ENCODE measurements at regions of chr3 and their contacts with region 1.

Region 1: GRCh38 chr3:45037734-45038455 is 11.8 kb downstream of the CLEC3B start:
- DNase-seq: peak; percentile 93 to 95 (median 94)
- H3K4me3 ChIP-seq: peak overlapping the region in 1 of 3 experiments; percentile 16
- H3K4me3 Mint-ChIP-seq: peak overlapping the region; percentile 55 to 68
- H3K27ac ChIP-seq: no peak overlapping the region
- H3K27ac Mint-ChIP-seq: peak overlapping the region in 2 of 7 donors; percentile 35 to 41
- H3K4me1 ChIP-seq: peaks cover 52 to 66% of the 10 kb centered on the region in 2 donors
- H3K4me1 Mint-ChIP-seq: peaks cover 68% of the 10 kb centered on the region
- H3K27me3 ChIP-seq: no peaks in the 10 kb centered on the region
- H3K27me3 Mint-ChIP-seq: peaks cover 0 to 6% (median 3%) of the 10 kb centered on the region in 3 donors
- CTCF ChIP-seq: peak; percentile 88

Region 2: DNA sequence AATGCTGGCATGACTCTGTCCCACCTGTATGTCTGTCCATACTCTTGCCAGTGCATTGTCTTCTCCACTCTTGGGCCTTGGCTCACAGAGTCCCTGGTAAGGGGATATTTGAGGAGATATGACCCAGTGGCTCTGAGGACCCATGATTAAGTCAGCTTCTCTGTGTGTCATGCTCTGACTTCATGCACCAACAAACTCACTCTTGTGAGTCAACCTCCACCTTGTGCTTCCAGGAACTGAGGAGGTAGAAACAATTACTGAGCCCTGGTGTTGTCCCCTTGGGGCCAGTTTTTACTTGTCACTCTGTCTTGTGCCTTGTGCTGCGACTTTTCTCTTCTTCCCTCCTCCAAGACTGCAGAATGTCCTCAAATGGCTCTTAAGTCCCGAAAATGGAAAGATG is 1220.1 kb before region 1 on chr3:
- intact Hi-C with region 1: no loop called
- DNase-seq: no peak
- H3K4me3 ChIP-seq: no peak overlapping the region
- H3K4me3 Mint-ChIP-seq: no peak overlapping the region
- H3K27ac ChIP-seq: no peak overlapping the region
- H3K27ac Mint-ChIP-seq: no peak overlapping the region
- H3K4me1 ChIP-seq: no peaks in the 10 kb centered on the region
- H3K4me1 Mint-ChIP-seq: no peaks in the 10 kb centered on the region
- H3K27me3 ChIP-seq: no peaks in the 10 kb centered on the region
- H3K27me3 Mint-ChIP-seq: peaks cover 0 to 2% (median 0%) of the 10 kb centered on the region in 3 donors
- CTCF ChIP-seq: no peak

Region 3: DNA sequence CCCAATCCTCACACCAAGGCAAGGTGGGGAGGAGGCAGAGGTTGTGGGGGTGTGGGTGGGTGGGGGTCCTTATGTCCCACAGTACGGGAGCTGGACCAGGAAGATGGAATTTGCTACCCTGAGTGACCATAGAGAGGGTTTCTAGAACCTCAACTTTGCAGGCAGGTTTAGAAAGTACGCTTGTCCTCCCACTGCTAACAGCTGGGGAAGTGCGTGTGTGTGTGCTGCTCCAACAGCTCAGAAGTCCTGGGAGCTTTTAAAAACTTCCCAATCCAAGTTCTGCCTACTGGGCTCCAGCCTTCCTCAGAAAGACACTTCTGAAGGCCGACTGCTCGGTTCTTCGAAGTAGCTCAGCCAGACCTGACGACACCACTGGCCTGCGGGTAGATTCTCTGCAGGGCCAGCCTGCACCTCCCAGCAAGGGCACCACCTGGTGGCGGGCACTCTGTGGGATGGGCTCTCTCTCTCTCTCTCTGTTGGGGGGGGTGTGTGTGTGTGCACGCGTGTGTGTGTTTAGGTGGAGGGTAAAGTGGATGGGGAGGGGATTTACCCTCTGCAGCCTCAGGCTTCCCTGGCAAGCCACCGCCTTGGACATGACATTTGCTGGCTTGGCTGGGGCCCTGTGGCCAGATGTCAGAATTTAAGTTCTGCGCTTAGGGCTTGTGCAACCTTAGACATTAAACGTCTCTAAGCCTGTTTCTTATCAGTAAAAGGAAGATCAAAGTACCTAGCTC is 172.6 kb after region 1 on chr3:
- intact Hi-C with region 1: loop called (anchors 1 to 2 kb)
- DNase-seq: peak; percentile 78 to 82 (median 79)
- H3K4me3 ChIP-seq: no peak overlapping the region
- H3K4me3 Mint-ChIP-seq: peak overlapping the region in 1 of 2 donors; percentile 63
- H3K27ac ChIP-seq: no peak overlapping the region
- H3K27ac Mint-ChIP-seq: peak overlapping the region in 2 of 7 donors; percentile 54 to 63
- H3K4me1 ChIP-seq: no peaks in the 10 kb centered on the region
- H3K4me1 Mint-ChIP-seq: peaks cover 16% of the 10 kb centered on the region
- H3K27me3 ChIP-seq: no peaks in the 10 kb centered on the region
- H3K27me3 Mint-ChIP-seq: peaks cover 0 to 2% (median 0%) of the 10 kb centered on the region in 3 donors
- CTCF ChIP-seq: peak; percentile 86

Region 4: GRCh38 chr3:45244356-45244755 is 206.5 kb after region 1 on chr3:
- intact Hi-C with region 1: no loop called
- DNase-seq: no peak
- H3K4me3 ChIP-seq: no peak overlapping the region
- H3K4me3 Mint-ChIP-seq: no peak overlapping the region
- H3K27ac ChIP-seq: no peak overlapping the region
- H3K27ac Mint-ChIP-seq: no peak overlapping the region
- H3K4me1 ChIP-seq: no peaks in the 10 kb centered on the region
- H3K4me1 Mint-ChIP-seq: peaks cover 4% of the 10 kb centered on the region
- H3K27me3 ChIP-seq: no peaks in the 10 kb centered on the region
- H3K27me3 Mint-ChIP-seq: peaks cover 4 to 5% (median 4%) of the 10 kb centered on the region in 3 donors
- CTCF ChIP-seq: no peak

Region 5: GRCh38 chr3:45409921-45410320 is 372.0 kb after region 1 on chr3:
- intact Hi-C with region 1: loop called in 1 of 2 experiments (anchors 10 kb)
- DNase-seq: no peak
- H3K4me3 ChIP-seq: no peak overlapping the region
- H3K4me3 Mint-ChIP-seq: no peak overlapping the region
- H3K27ac ChIP-seq: no peak overlapping the region
- H3K27ac Mint-ChIP-seq: no peak overlapping the region
- H3K4me1 ChIP-seq: no peaks in the 10 kb centered on the region
- H3K4me1 Mint-ChIP-seq: peaks cover 17% of the 10 kb centered on the region
- H3K27me3 ChIP-seq: no peaks in the 10 kb centered on the region
- H3K27me3 Mint-ChIP-seq: no peaks in the 10 kb centered on the region
- CTCF ChIP-seq: no peak

Region 6: GRCh38 chr3:45499529-45499928 is 461.6 kb after region 1 on chr3:
- intact Hi-C with region 1: loop called (anchors 5 kb)
- DNase-seq: peak; percentile 5 to 23 (median 15)
- H3K4me3 ChIP-seq: no peak overlapping the region
- H3K4me3 Mint-ChIP-seq: no peak overlapping the region
- H3K27ac ChIP-seq: no peak overlapping the region
- H3K27ac Mint-ChIP-seq: no peak overlapping the region
- H3K4me1 ChIP-seq: no peaks in the 10 kb centered on the region
- H3K4me1 Mint-ChIP-seq: no peaks in the 10 kb centered on the region
- H3K27me3 ChIP-seq: no peaks in the 10 kb centered on the region
- H3K27me3 Mint-ChIP-seq: peaks cover 0 to 2% (median 0%) of the 10 kb centered on the region in 3 donors
- CTCF ChIP-seq: peak; percentile 72

Region 7: GRCh38 chr3:45656575-45657363 is 618.9 kb after region 1 on chr3:
- intact Hi-C with region 1: loop called in 1 of 2 experiments (anchors 10 kb)
- DNase-seq: peak; percentile 95 to 97 (median 96)
- H3K4me3 ChIP-seq: no peak overlapping the region
- H3K4me3 Mint-ChIP-seq: peak overlapping the region; percentile 53 to 60
- H3K27ac ChIP-seq: peak overlapping the region; percentile 42 to 65
- H3K27ac Mint-ChIP-seq: peak overlapping the region; percentile 92 to 98 (median 97)
- H3K4me1 ChIP-seq: peaks cover 36 to 40% of the 10 kb centered on the region in 2 donors
- H3K4me1 Mint-ChIP-seq: peaks cover 46% of the 10 kb centered on the region
- H3K27me3 ChIP-seq: no peaks in the 10 kb centered on the region
- H3K27me3 Mint-ChIP-seq: no peaks in the 10 kb centered on the region
- CTCF ChIP-seq: peak; percentile 85

Region 8: GRCh38 chr3:45688882-45689756 is 651.2 kb after region 1 on chr3 and contains the start of gene SACM1L:
- intact Hi-C with region 1: loop called in 1 of 2 experiments (anchors 10 kb)
- DNase-seq: peak; percentile 98 to 99 (median 98)
- H3K4me3 ChIP-seq: peak within 1 kb of the TSS; percentile 55 to 91 (median 77)
- H3K4me3 Mint-ChIP-seq: peak within 1 kb of the TSS; percentile 83 to 90
- H3K27ac ChIP-seq: peak within 1 kb of the TSS; percentile 80 to 81
- H3K27ac Mint-ChIP-seq: peak within 1 kb of the TSS; percentile 86 to 92 (median 91)
- H3K4me1 ChIP-seq: peaks cover 35 to 41% of the 10 kb centered on the region in 2 donors
- H3K4me1 Mint-ChIP-seq: peaks cover 42% of the 10 kb centered on the region
- H3K27me3 ChIP-seq: no peaks in the 10 kb centered on the region
- H3K27me3 Mint-ChIP-seq: peaks cover 0 to 5% (median 0%) of the 10 kb centered on the region in 3 donors
- CTCF ChIP-seq: no peak
- polyA plus RNA-seq, gene SACM1L: 14.6 to 25.7 (median 21.5) TPM